ENCODE measurements at regions of chr1 and their contacts with region 1.

Region 1: DNA sequence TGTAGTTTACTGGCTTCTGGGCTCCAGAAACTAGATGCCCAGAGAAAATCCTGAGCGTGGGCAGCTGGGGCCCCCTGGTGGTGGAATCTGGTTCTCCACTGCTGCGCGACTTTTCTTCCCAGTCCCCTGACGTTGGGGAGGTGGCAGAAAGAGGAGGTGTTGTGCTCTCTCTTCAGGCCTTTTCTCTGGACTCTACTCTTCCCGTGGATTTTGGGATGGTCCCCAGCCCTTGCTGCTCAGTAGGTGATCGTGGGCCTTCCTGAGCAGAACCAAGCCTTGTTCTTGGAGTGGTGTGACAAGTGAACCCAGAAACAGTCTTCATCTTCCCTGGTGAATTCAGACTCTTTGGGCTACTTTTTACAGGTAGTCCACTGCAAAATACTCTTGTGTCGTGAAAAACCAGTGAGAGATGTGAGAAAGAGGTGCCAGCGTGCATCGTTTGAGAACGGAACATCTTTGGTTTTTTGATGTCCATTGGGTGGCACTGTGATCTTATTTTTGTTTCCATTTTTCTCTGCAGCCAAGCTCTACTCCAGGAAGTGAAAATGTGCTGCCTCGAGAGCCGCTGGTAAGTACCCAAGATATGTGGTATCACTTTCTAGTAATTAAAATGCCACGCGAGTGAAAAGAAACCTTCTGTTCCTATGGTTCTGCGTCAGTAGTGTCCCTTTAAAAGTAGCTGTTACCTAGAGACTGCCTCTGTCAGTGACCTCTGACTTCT is 20.2 kb downstream of the PEX14 start:
- DNase-seq: peak; percentile 66 to 88 (median 81)
- ATAC-seq: peak; percentile 76
- H3K4me3 ChIP-seq: peak overlapping the region; percentile 50 to 59
- H3K4me3 Mint-ChIP-seq: peak overlapping the region; percentile 83
- H3K27ac ChIP-seq: peak overlapping the region; percentile 72 to 80
- H3K27ac Mint-ChIP-seq: peak overlapping the region; percentile 98
- H3K4me1 ChIP-seq: peaks cover 21% of the 10 kb centered on the region
- H3K4me1 Mint-ChIP-seq: peaks cover 42% of the 10 kb centered on the region
- H3K27me3 ChIP-seq: no peaks in the 10 kb centered on the region
- H3K27me3 Mint-ChIP-seq: no peaks in the 10 kb centered on the region
- CTCF ChIP-seq: peak; percentile 99

Region 2: GRCh38 chr1:10378081-10378841 is 116.7 kb before region 1 on chr1:
- CTCF ChIA-PET with region 1: interaction called, 3 read pairs
- POLR2A ChIA-PET with region 1: no interaction called
- intact Hi-C with region 1: loop called in 1 of 2 experiments (anchors 5 kb)
- DNase-seq: peak in 1 of 9 experiments; percentile 18
- ATAC-seq: no peak
- H3K4me3 ChIP-seq: no peak overlapping the region
- H3K4me3 Mint-ChIP-seq: no peak overlapping the region
- H3K27ac ChIP-seq: no peak overlapping the region
- H3K27ac Mint-ChIP-seq: no peak overlapping the region
- H3K4me1 ChIP-seq: no peaks in the 10 kb centered on the region
- H3K4me1 Mint-ChIP-seq: no peaks in the 10 kb centered on the region
- H3K27me3 ChIP-seq: no peaks in the 10 kb centered on the region
- H3K27me3 Mint-ChIP-seq: no peaks in the 10 kb centered on the region
- CTCF ChIP-seq: no peak

Region 3: DNA sequence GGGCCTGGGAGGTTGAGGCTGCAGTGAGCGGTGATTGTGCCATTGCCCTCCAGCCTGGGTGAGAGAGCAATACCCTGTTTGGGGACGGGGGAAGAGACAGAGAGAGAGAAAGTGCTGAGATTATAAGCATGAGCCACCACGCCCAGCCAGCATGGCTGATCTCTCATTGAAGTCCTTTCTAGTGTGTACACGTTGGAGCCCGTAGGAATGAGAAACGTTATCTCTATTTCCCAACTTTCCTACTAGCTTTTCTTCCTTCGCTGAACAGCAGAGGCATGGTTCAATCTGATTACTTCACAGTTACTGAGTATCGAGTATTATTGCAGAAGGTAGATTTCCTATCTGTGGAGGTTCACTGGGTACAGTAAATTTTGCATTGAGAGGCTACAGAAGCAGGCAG is 15.6 kb before region 1 on chr1:
- CTCF ChIA-PET with region 1: interaction called, 18 read pairs
- POLR2A ChIA-PET with region 1: no interaction called
- intact Hi-C with region 1: no loop called
- DNase-seq: no peak
- ATAC-seq: no peak
- H3K4me3 ChIP-seq: no peak overlapping the region
- H3K4me3 Mint-ChIP-seq: no peak overlapping the region
- H3K27ac ChIP-seq: no peak overlapping the region
- H3K27ac Mint-ChIP-seq: no peak overlapping the region
- H3K4me1 ChIP-seq: peaks cover 16% of the 10 kb centered on the region
- H3K4me1 Mint-ChIP-seq: peaks cover 34% of the 10 kb centered on the region
- H3K27me3 ChIP-seq: no peaks in the 10 kb centered on the region
- H3K27me3 Mint-ChIP-seq: no peaks in the 10 kb centered on the region
- CTCF ChIP-seq: no peak

Region 4: GRCh38 chr1:10514490-10515235 is 19.7 kb after region 1 on chr1:
- CTCF ChIA-PET with region 1: interaction called, 135 read pairs
- POLR2A ChIA-PET with region 1: interaction called, 6 read pairs
- intact Hi-C with region 1: loop called (anchors 1 to 2 kb)
- DNase-seq: peak in 2 of 9 experiments; percentile 53 to 65
- ATAC-seq: no peak
- H3K4me3 ChIP-seq: no peak overlapping the region
- H3K4me3 Mint-ChIP-seq: no peak overlapping the region
- H3K27ac ChIP-seq: peak overlapping the region in 1 of 2 experiments; percentile 85
- H3K27ac Mint-ChIP-seq: peak overlapping the region; percentile 86
- H3K4me1 ChIP-seq: peaks cover 73% of the 10 kb centered on the region
- H3K4me1 Mint-ChIP-seq: peaks cover 78% of the 10 kb centered on the region
- H3K27me3 ChIP-seq: no peaks in the 10 kb centered on the region
- H3K27me3 Mint-ChIP-seq: no peaks in the 10 kb centered on the region
- CTCF ChIP-seq: peak; percentile 2

Region 5: DNA sequence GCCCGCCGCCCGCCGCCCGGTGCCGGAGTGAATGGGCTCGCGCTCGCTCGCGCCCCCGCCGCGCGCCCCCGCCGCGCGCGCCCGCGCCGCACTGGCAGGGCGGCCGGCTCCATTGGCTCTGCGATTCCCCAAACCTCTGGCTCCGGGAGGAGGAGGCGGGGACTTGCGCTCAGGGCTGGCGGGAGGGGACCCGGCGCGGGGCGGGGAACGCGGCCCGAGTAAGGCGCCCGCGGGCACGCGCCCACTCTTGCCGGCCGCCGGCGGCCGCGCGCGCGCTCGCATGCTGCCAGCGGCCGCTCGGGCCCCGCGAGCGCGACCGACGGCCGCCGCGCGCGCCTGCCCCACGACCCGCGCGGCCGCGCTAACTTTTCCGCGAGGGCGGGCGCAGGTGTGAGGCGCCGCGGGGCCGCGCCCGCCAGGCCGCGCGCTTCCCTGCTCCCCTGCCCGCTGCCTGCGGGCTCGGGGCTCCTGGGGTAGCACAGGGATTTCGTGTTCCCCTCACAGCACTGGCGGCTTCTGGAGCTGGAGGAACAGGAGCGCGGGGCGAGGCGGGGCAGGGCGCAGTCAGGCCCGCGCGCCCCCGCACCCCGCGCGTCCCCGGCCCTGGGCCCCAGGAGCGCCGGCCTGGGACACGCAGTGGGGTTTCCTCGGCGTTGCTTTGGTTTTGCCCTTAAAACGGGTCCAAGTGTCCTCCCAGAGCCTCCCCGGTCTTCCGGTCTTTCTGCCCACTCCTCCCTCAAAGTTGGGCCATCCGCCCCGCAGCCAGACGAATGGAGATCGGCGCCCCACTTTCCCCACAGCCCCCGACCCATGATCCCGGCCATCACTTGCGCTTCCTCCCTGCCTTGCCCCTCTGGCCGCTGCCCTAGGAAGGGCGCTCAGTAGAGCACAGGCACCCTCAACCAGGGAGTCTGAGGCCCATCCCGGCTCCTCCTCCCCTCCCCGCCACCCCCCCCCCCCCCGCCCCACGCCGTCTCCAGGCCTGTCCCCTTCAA is 200.0 kb after region 1 on chr1:
- CTCF ChIA-PET with region 1: interaction called, 12 read pairs
- POLR2A ChIA-PET with region 1: interaction called, 3 read pairs
- intact Hi-C with region 1: loop called (anchors 5 kb)
- DNase-seq: peak; percentile 60 to 93 (median 73)
- ATAC-seq: peak; percentile 64
- H3K4me3 ChIP-seq: peak overlapping the region; percentile 32 to 48
- H3K4me3 Mint-ChIP-seq: peak overlapping the region; percentile 83
- H3K27ac ChIP-seq: no peak overlapping the region
- H3K27ac Mint-ChIP-seq: peak overlapping the region; percentile 88
- H3K4me1 ChIP-seq: peaks cover 17% of the 10 kb centered on the region
- H3K4me1 Mint-ChIP-seq: peaks cover 13% of the 10 kb centered on the region
- H3K27me3 ChIP-seq: no peaks in the 10 kb centered on the region
- H3K27me3 Mint-ChIP-seq: no peaks in the 10 kb centered on the region
- CTCF ChIP-seq: no peak

Region 6: DNA sequence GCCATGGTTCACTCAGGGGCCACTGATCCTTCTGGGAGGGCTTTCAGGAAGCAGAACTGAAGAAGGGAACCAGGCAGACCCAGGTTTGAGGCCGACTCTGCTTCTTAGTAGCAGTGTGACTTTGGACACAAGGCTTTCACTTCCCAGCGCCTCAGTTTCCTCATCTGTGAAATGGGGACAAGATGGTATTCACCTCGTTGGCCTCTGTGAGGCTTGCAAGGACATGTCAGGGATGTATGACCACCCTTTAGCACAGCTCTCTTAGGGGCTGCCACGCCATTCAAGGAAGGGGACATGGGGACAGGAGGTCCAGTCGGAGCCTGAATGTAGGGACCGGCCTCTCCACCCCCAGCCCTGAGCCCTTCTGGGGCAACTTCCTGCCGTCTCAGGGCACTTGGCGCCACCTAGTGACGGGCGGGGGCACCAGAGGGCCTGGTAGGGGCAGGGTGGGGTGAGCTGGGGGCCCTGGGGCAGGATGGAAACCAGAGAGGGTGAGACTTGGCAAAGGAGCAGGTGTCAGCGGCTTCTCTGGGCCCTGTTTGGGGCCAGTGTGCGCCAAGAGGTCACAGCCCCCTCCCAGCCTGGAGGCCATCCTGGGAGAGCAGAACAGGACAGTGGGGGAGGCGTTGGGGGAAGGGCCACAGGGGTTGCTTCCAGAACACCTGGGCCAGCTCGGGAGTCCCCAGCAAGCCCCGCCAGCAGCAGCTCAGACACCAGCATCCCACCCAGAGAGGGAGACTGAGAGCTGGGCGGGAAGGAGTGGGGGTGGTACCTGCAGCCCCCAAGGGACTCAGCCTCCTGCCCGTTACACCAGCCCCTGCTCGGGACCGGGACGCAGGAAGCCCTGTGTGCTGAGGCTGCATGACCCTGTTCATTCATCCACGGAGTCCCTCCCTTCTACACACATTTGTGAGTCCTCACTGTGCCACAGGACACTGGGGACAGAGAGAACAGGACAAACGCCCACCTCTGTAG is 415.1 kb after region 1 on chr1:
- CTCF ChIA-PET with region 1: interaction called, 16 read pairs
- POLR2A ChIA-PET with region 1: no interaction called
- intact Hi-C with region 1: loop called in 1 of 2 experiments (anchors 1 kb)
- DNase-seq: peak; percentile 64 to 87 (median 81)
- ATAC-seq: peak; percentile 95
- H3K4me3 ChIP-seq: no peak overlapping the region
- H3K4me3 Mint-ChIP-seq: no peak overlapping the region
- H3K27ac ChIP-seq: no peak overlapping the region
- H3K27ac Mint-ChIP-seq: no peak overlapping the region
- H3K4me1 ChIP-seq: peaks cover 29% of the 10 kb centered on the region
- H3K4me1 Mint-ChIP-seq: peaks cover 14% of the 10 kb centered on the region
- H3K27me3 ChIP-seq: no peaks in the 10 kb centered on the region
- H3K27me3 Mint-ChIP-seq: no peaks in the 10 kb centered on the region
- CTCF ChIP-seq: peak; percentile 66

Region 7: DNA sequence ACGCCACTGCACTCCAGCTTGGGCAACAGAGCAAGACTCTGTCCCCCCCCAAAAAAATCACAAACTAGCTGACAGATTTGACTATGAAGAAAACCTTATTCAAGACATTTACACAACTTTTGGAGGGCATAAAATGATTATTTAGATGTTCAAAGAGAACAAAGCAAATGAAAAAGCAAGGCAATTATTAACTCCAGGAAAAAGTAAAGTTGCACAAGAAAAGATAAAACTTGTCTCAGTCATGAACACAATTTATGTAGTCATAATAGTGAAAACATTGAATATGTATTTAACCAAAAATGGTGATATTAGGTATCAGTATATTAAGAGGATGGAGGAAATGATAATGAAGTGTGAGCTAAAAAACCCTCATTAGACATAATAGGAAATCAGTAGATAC is 505.6 kb after region 1 on chr1:
- CTCF ChIA-PET with region 1: no interaction called
- POLR2A ChIA-PET with region 1: no interaction called
- intact Hi-C with region 1: no loop called
- DNase-seq: no peak
- ATAC-seq: no peak
- H3K4me3 ChIP-seq: no peak overlapping the region
- H3K4me3 Mint-ChIP-seq: no peak overlapping the region
- H3K27ac ChIP-seq: no peak overlapping the region
- H3K27ac Mint-ChIP-seq: no peak overlapping the region
- H3K4me1 ChIP-seq: no peaks in the 10 kb centered on the region
- H3K4me1 Mint-ChIP-seq: no peaks in the 10 kb centered on the region
- H3K27me3 ChIP-seq: no peaks in the 10 kb centered on the region
- H3K27me3 Mint-ChIP-seq: no peaks in the 10 kb centered on the region
- CTCF ChIP-seq: no peak

Measured in CD8-positive, alpha-beta T cell (primary cell).